ENCODE measurements at regions of chr11 and their contacts with region 1.

Region 1: DNA sequence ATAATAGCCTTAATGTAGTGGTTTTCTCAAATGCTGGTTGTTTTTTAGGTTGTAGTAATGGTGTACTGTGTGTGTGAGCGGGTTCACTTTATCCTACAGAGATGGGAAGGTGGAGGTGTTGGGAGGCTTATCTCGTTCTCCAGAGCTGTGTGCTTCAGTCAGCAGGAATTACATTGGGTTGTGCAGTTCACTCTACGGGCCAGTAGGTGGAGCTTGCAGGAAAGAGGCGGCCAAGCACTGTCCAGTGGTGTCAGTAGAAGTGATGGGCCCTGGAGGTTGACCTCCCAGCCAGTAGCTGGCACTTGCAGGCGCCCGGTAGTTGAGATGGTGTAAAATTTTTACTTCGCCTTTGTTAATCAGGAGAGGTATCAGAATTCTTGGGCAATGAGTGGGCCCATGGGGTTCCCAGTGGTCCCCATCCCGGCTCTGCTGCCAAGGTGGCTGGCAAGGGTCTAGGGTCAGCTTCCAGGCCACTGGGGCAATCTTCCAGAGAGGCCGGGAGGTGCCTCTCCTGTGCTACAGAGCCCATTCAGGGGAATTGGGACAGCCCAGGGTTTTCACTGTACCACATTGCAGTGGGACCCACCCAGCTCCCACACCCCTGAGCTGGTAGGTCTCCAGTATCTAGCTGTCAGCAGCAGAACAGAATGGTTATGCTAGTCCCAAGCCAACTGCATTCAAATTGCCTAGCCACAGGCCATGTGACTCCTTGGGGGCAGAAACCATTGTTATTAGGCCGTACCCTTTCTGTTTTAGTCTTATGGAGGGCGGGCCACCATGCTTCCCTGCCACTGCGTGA is 43.9 kb downstream of the BIRC2 start:
- DNase-seq: peak; percentile 89
- H3K4me3 ChIP-seq: no peak overlapping the region
- H3K4me3 Mint-ChIP-seq: no peak overlapping the region
- H3K27ac Mint-ChIP-seq: peak overlapping the region; percentile 3
- H3K4me1 ChIP-seq: peaks cover 16% of the 10 kb centered on the region
- H3K4me1 Mint-ChIP-seq: peaks cover 21% of the 10 kb centered on the region
- H3K27me3 ChIP-seq: no peaks in the 10 kb centered on the region
- H3K27me3 Mint-ChIP-seq: no peaks in the 10 kb centered on the region
- CTCF ChIP-seq: peak; percentile 97 to 98

Region 2: DNA sequence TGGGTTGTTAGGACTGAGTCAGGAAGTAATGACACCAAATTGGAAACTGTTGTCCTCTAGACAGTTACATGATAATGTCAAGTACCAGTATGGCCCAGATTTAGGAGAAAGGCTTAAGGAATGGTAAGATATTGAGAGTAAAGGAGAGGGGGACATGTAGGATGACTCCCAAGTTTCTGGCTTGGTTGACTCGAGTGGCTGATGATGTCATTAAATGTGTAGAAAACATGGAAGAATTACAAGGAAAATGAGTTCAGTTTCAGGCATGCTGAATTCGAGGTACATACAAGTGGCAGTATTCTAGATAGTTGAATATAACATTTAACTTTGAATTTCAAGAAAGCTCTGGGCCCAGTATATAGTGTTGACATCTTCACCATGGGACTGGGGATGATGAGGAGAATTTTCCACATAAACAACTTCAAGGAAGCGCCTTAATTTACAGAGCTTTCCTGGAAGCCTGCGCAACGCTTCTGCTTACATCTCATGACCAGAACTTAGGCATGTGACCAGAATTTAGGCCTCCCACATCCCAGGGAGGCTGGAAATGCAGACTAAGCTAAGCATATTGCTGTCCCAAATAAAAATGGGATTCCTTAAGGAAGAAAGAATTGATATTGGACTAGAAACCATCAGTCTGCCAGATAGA is 339.8 kb before region 1 on chr11:
- CTCF ChIA-PET with region 1: no interaction called
- POLR2A ChIA-PET with region 1: no interaction called
- intact Hi-C with region 1: no loop called
- DNase-seq: no peak
- H3K4me3 ChIP-seq: no peak overlapping the region
- H3K4me3 Mint-ChIP-seq: no peak overlapping the region
- H3K27ac Mint-ChIP-seq: no peak overlapping the region
- H3K4me1 ChIP-seq: peaks cover 2% of the 10 kb centered on the region; the same call in 1 of the 2 replicates
- H3K4me1 Mint-ChIP-seq: peaks cover 21% of the 10 kb centered on the region
- H3K27me3 ChIP-seq: no peaks in the 10 kb centered on the region
- H3K27me3 Mint-ChIP-seq: no peaks in the 10 kb centered on the region
- CTCF ChIP-seq: no peak

Region 3: GRCh38 chr11:102187416-102188151 is 203.3 kb before region 1 on chr11:
- CTCF ChIA-PET with region 1: no interaction called
- POLR2A ChIA-PET with region 1: no interaction called
- intact Hi-C with region 1: no loop called
- DNase-seq: no peak
- H3K4me3 ChIP-seq: no peak overlapping the region
- H3K4me3 Mint-ChIP-seq: peak overlapping the region; percentile 64
- H3K27ac Mint-ChIP-seq: peak overlapping the region; percentile 54
- H3K4me1 ChIP-seq: peaks cover 83% of the 10 kb centered on the region
- H3K4me1 Mint-ChIP-seq: peaks cover 58% of the 10 kb centered on the region
- H3K27me3 ChIP-seq: no peaks in the 10 kb centered on the region
- H3K27me3 Mint-ChIP-seq: no peaks in the 10 kb centered on the region
- CTCF ChIP-seq: no peak

Region 4: GRCh38 chr11:102341844-102342318 is 49.0 kb before region 1 on chr11:
- CTCF ChIA-PET with region 1: interaction called, 13 read pairs
- POLR2A ChIA-PET with region 1: no interaction called
- intact Hi-C with region 1: loop called (anchors 5 kb)
- DNase-seq: peak; percentile 86 to 87
- H3K4me3 ChIP-seq: no peak overlapping the region
- H3K4me3 Mint-ChIP-seq: no peak overlapping the region
- H3K27ac Mint-ChIP-seq: no peak overlapping the region
- H3K4me1 ChIP-seq: peaks cover 4% of the 10 kb centered on the region; the same call in 1 of the 2 replicates
- H3K4me1 Mint-ChIP-seq: peaks cover 16% of the 10 kb centered on the region
- H3K27me3 ChIP-seq: no peaks in the 10 kb centered on the region
- H3K27me3 Mint-ChIP-seq: no peaks in the 10 kb centered on the region
- CTCF ChIP-seq: peak; percentile 92 to 95

Region 5: DNA sequence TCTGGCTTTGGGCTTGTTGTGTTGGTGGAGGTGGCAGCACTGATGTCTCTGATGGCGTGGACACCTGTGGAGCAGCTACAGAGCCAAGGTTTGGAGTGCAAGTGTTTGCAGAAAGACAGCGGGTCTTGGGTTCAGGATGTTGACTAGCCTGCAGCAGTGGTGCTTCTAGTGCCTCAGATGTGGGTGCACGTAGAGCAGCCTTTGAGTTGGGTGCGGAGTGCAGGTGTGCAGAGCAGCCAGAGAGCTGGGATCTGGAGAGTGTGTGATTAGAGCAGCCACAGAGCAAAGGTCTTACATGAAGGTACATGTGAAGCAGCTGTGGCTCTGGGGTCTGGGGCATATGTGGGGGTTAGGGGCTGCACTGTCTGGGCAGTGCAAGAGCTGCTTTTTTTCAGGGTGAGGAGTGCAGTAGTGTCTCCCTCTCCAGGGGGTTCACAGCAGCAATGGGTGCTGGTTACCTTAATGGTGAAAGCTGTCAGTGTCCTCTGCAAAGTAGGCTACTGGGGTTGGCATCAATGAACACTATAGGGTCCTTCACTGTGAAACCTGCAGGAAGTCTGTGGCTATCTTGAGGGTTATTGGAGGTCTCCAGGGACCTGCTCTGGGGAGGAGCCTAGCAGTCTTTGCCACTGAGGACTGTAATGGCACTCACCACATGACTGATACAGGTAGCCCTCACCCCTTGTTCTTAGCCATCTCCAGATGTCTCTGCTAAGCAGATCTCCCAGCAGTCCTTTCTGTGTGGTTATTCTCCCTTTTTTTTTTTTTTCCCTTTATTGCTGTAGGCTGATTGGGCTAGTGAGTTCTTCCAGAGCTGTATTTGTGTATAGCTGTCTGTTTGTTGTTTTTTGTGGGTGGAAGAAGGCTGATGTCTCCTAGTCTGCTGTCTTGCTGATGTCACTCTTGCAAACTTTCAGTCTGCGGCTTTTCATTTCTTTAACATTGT is 29.5 kb before region 1 on chr11:
- CTCF ChIA-PET with region 1: no interaction called
- POLR2A ChIA-PET with region 1: no interaction called
- intact Hi-C with region 1: no loop called
- DNase-seq: no peak
- H3K4me3 ChIP-seq: no peak overlapping the region
- H3K4me3 Mint-ChIP-seq: no peak overlapping the region
- H3K27ac Mint-ChIP-seq: no peak overlapping the region
- H3K4me1 ChIP-seq: 0 out of 2 replicates have a peak, but pooled peaks cover 4% of the 10 kb centered on the region
- H3K4me1 Mint-ChIP-seq: peaks cover 11% of the 10 kb centered on the region
- H3K27me3 ChIP-seq: no peaks in the 10 kb centered on the region
- H3K27me3 Mint-ChIP-seq: no peaks in the 10 kb centered on the region
- CTCF ChIP-seq: no peak

Region 6: DNA sequence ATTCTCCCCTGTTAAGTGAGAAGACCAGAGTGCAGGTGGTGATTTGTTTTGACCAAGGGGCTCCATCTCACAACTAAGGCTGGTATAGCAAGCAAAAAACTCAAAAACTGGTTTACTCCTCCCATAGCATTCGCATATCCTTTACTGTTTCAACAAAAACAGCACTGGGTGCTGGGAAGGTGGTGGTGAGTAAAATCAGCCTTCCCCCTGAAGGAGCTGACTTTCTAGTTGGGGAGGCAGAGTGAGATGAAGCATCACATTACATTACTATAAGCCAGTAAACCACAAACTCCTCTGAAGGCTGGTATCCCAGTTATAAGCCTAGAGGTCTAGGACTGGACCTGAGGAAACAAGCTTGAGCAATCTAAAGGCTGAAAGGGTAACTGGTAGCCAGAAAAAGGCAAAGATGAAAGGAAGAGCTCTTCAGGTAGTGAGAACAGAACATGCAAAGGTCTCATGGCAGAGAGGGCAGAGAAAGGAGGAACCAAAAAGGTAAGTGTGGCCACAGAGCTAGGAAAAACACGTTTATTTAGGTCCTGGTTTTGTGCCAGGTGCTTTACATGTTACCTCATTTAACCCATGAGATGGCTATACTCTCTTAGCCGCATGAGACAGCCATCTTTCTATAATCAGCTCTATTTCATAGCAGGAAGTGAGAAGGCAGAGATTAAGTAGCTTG is 39.4 kb after region 1 on chr11:
- CTCF ChIA-PET with region 1: interaction called, 23 read pairs
- POLR2A ChIA-PET with region 1: no interaction called
- intact Hi-C with region 1: loop called (anchors 2 kb)
- DNase-seq: no peak
- H3K4me3 ChIP-seq: no peak overlapping the region
- H3K4me3 Mint-ChIP-seq: no peak overlapping the region
- H3K27ac Mint-ChIP-seq: peak overlapping the region; percentile 28
- H3K4me1 ChIP-seq: peaks cover 41% of the 10 kb centered on the region
- H3K4me1 Mint-ChIP-seq: peaks cover 40% of the 10 kb centered on the region
- H3K27me3 ChIP-seq: no peaks in the 10 kb centered on the region
- H3K27me3 Mint-ChIP-seq: no peaks in the 10 kb centered on the region
- CTCF ChIP-seq: no peak